Activated CD4-positive, alpha-beta T cell treated with anti-CD3 and anti-CD28 coated beads for 36 hours (primary cell): ENCODE measurements at regions of chr7 and their contacts with region 1.

Region 1: DNA sequence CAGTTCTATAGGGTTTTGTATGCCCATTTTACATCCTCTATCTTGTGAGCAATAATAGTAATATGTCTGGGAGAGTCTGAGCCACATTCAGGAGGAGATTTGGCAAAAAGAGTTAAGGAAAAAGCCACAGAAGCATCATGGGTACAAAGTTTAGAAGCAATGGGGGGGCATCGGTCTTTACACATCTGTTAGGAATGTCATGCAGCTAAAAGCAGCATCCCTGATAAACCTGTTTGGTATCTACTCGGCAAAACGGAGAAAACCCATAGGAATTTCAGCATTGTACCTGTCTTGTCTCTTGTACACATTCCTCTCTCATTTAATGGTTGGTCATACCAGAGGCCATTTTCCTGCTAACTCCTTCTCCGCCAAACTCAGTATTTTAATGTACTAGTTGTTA is 12.5 kb upstream of the HERPUD2 start:
- DNase-seq: no peak
- ATAC-seq: no peak
- H3K4me3 Mint-ChIP-seq: no peak overlapping the region
- H3K27ac Mint-ChIP-seq: no peak overlapping the region
- H3K4me1 Mint-ChIP-seq: peaks cover 15% of the 10 kb centered on the region
- H3K27me3 Mint-ChIP-seq: peaks cover 2% of the 10 kb centered on the region

Region 2: DNA sequence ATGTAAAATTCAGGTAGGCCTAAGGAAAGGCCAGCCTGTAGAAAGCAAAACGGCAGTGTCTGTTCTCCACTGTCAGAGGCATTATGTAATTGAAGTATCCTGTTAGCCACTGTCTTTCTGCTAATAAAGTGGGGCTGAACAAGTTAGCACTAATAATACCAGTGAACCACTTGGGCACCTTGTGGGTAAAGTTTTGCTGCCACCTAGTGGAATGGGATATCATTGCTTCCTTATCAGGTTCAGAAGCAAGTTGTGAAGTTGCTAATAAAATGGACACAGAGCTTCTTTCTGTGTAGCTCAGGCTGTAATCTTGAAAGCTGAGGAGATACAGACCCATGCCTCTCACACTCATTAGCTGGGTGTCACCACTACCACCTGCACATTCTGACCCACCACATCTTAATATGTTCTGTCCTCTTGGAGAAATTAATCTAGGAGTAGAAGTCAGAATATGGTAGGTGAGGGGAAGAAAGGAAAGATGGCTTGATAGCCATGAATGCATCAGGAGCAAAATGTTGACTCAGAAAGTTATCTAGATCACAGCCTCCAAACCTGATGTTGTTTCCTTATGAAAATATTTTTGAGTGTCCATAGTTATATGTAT is 268.5 kb after region 1 on chr7:
- CTCF ChIA-PET with region 1: no interaction called
- POLR2A ChIA-PET with region 1: no interaction called
- intact Hi-C with region 1: loop called in 1 of 2 experiments (anchors 5 kb)
- DNase-seq: peak; percentile 58
- ATAC-seq: peak; percentile 61
- H3K4me3 Mint-ChIP-seq: no peak overlapping the region
- H3K27ac Mint-ChIP-seq: no peak overlapping the region
- H3K4me1 Mint-ChIP-seq: peaks cover 3% of the 10 kb centered on the region
- H3K27me3 Mint-ChIP-seq: peaks cover 10% of the 10 kb centered on the region